ENCODE measurements at regions of chr12 and their contacts with region 1.

Region 1: DNA sequence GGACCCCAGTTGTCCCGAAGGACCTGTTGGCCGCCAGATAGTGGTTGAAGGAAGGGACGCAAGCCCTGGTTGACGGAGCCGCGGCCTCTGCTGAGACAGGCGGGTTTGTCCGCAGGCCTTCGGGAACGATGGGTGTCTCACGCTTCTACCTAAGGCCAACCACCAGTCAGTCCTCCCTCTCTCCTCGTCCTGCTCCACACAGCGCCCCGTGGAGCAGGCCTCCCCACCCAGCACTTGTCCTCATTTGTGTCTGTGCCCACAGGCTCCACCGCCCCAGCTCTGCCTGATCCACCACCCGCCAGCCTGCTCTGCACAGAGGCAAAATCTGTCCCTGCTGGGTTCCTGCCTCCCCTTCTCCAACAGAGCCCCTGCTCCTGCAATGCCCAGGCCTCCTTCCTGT is 41.0 kb downstream of the RIMBP2 start:
- DNase-seq: no peak
- H3K4me3 ChIP-seq: no peak overlapping the region
- H3K4me3 Mint-ChIP-seq: no peak overlapping the region
- H3K27ac Mint-ChIP-seq: no peak overlapping the region
- H3K4me1 ChIP-seq: no peaks in the 10 kb centered on the region
- H3K4me1 Mint-ChIP-seq: no peaks in the 10 kb centered on the region
- H3K27me3 ChIP-seq: no peaks in the 10 kb centered on the region
- H3K27me3 Mint-ChIP-seq: peaks cover 2% of the 10 kb centered on the region
- CTCF ChIP-seq: no peak

Region 2: GRCh38 chr12:130064999-130065398 is 610.1 kb before region 1 on chr12:
- CTCF ChIA-PET with region 1: no interaction called
- POLR2A ChIA-PET with region 1: interaction called, 14 read pairs
- intact Hi-C with region 1: no loop called
- DNase-seq: no peak
- H3K4me3 ChIP-seq: no peak overlapping the region
- H3K4me3 Mint-ChIP-seq: no peak overlapping the region
- H3K27ac Mint-ChIP-seq: no peak overlapping the region
- H3K4me1 ChIP-seq: no peaks in the 10 kb centered on the region
- H3K4me1 Mint-ChIP-seq: no peaks in the 10 kb centered on the region
- H3K27me3 ChIP-seq: no peaks in the 10 kb centered on the region
- H3K27me3 Mint-ChIP-seq: no peaks in the 10 kb centered on the region
- CTCF ChIP-seq: no peak

Region 3: GRCh38 chr12:131002216-131002631 is 327.1 kb after region 1 on chr12:
- CTCF ChIA-PET with region 1: no interaction called
- POLR2A ChIA-PET with region 1: no interaction called
- intact Hi-C with region 1: no loop called
- DNase-seq: no peak
- H3K4me3 ChIP-seq: no peak overlapping the region
- H3K4me3 Mint-ChIP-seq: no peak overlapping the region
- H3K27ac Mint-ChIP-seq: no peak overlapping the region
- H3K4me1 ChIP-seq: no peaks in the 10 kb centered on the region
- H3K4me1 Mint-ChIP-seq: no peaks in the 10 kb centered on the region
- H3K27me3 ChIP-seq: no peaks in the 10 kb centered on the region
- H3K27me3 Mint-ChIP-seq: no peaks in the 10 kb centered on the region
- CTCF ChIP-seq: no peak

Measured in Caco-2 (cell line).